ENCODE measurements at regions of chr17 and their contacts with region 1.

Region 1: DNA sequence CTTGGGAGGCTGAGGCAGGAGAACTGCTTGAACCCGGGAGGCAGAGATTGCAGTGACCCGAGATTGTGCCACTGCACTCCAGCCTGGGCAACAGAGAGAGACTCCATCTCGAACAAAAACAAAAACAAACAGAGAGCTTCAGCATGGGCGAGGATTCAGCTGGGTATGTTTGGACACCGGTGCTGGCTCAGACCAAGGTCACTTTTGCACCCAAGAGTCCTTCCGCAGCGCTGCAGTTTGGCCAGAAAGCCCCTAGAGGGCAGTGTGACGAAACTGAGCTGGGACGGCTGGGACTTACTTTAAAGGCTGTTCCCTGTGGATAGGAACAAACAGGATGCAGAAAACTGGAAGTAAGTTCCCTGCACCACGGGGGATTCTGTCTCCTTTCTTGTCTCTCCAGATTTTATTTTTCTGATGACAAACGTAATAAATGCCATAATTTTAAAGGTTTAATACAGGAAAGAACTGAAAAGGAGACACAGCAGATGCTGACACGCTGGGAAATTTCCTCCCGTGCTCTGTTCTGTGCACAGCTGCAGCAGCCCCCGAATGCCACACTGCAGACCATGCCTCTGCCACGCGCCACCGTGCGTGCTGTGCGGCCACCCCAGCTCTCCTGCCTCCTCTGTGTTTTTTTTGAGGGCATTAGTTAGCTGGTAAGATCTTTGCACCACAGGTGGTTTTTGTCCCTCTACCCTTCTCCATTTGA is 25.2 kb upstream of the USP36 start:
- DNase-seq: peak; percentile 62 to 85
- H3K4me3 ChIP-seq: no peak overlapping the region
- H3K27ac ChIP-seq: no peak overlapping the region
- H3K4me1 ChIP-seq: no peaks in the 10 kb centered on the region
- H3K27me3 ChIP-seq: no peaks in the 10 kb centered on the region
- CTCF ChIP-seq: peak; percentile 69 to 87 (median 84)
- POLR2A ChIP-seq: no peak

Region 2: DNA sequence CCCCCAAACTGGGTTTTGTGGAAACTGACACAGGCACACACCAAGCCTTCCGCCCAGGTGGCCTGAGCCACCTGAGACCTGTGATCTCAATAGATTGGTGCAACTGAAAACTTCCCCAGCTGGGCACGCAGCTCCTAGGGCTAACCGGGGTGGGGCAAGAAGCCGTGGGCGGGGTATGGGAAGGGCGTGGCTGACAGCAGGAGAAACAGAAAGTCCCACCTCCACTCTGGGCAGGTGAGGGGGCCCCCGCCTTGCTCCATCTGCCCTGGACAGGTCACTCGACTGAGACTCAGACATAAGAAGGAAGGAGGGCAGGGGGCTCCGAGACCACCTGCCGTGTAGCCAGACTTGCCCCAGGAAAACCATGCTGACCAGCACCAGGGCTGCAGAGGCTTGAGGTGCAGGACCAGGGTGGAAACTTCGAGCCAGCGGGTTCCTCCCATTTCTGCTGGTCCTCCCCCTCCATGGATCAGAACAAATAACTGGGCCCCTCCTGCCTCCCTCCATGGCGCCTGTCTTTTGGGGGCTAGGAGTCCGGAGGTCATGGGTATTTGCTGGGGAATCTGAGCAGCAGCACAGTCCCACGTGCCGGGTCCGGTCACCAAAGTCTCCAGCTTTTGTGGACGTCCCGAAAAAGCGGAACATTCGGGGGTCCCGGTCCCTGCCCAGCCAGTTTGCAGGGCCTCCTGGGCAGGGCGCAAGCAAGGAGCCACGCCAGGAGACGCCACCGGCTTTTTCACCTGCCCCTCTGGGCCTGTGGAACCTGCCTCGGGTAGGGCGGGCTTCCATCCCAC is 58.0 kb after region 1 on chr17:
- intact Hi-C with region 1: loop called (anchors 2 kb)
- DNase-seq: peak; percentile 82
- H3K4me3 ChIP-seq: peak overlapping the region; percentile 79 to 93 (median 82)
- H3K27ac ChIP-seq: peak overlapping the region; percentile 87 to 97
- H3K4me1 ChIP-seq: peaks cover 6 to 11% of the 10 kb centered on the region in 2 donors
- H3K27me3 ChIP-seq: no peaks in the 10 kb centered on the region
- CTCF ChIP-seq: no peak
- POLR2A ChIP-seq: no peak

Region 3: DNA sequence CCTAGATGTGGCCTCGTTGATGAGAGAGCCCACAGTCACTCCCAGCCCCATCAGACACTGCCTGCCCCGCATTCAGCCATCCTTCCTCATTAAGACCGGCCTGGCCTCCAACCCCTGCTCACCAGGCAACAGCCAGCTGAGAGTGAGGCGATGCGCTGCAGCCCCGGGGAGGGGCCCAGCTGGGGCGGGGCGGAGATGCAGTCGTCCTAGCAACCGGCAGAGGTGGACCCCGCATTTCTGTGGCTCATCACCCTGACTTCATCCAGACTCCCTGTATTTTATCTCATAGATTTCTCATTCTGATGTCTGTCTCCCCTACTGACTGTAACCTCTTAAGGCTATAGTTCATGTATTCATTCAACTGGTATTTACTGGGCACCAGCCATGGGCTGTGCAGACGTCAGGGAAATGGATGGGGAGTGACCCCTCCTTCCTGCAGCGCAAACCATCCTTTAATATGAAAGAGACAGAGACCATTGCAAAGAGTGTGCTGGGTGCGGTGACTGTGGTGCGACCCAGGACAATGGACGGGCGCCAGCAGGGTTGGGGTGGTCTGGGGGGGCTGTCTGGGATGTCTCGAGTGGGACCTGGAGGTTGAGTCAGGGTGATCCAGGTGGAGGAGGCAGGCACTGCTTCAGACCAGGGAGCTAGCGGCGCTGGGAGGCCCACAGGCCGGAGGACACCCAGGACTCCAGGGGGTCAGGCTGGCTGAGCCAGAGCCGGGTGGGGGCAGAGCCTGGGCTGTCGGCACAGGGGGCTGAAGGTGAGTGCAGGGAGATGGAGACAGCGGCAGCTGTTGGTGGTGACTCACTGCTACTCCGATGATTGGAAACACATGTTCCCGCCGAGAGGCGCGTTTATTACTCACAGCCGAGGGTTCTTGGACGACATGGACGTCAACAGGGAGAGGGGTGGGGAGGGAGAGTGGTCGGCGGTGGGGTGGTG is 69.8 kb after region 1 on chr17:
- intact Hi-C with region 1: no loop called
- DNase-seq: peak in 1 of 2 donors; percentile 45
- H3K4me3 ChIP-seq: no peak overlapping the region
- H3K27ac ChIP-seq: peak overlapping the region; percentile 70 to 95
- H3K4me1 ChIP-seq: peaks cover 0 to 15% of the 10 kb centered on the region in 2 donors
- H3K27me3 ChIP-seq: no peaks in the 10 kb centered on the region
- CTCF ChIP-seq: no peak
- POLR2A ChIP-seq: no peak

Region 4: DNA sequence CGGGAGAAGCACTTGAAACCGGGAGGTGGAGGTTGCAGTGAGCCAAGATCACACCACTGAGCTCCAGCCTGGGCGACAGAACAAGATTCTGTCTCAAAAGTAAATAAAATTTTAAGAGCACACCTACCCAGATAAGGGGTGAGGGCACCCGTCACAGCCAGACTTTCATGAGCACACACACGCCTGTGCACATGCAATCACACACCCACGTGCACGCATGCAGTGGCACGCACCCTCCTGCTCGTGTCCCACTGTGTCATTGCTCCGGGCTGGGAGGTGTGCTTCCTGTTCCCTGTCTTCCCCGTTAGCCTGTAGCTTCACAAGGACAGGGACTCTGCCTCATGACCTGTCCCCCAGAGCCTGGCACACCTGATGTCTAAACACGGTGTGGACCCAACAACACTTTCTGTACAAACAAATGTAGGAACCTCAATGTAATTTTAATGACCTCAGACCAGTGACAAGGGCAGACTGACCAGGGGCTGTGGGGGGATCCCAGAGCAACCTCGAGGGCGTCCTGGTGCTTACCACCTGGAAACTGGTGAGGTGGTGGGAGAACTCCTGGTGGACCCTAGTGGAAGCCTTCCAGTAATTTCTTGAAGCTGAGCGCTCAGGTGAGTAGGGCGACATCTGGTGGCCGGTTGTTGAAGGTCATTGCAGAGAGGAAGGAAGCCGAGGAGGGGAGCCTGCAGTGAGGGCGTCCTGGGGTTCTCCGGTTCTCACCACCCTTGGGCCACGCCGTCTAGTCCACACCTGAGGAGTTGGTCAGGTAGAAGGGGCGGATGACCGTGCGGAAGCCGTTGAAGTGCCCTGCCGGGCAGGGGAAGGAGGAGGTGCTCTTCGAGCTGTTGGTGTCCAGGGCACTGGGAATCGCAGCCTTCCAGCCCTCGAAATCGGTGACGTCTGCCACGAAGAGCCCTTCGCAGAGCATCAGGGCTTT is 105.3 kb after region 1 on chr17:
- intact Hi-C with region 1: loop called (anchors 10 kb)
- DNase-seq: peak; percentile 60 to 79
- H3K4me3 ChIP-seq: peak overlapping the region in 1 of 3 donors; percentile 27
- H3K27ac ChIP-seq: peak overlapping the region in 1 of 2 donors; percentile 76
- H3K4me1 ChIP-seq: peaks cover 0 to 3% of the 10 kb centered on the region in 2 donors
- H3K27me3 ChIP-seq: no peaks in the 10 kb centered on the region
- CTCF ChIP-seq: peak; percentile 81 to 91 (median 83)
- POLR2A ChIP-seq: no peak